ENCODE measurements at regions of chr4 and their contacts with region 1.

Region 1: GRCh38 chr4:87220094-87220822 is at the start of gene KLHL8:
- DNase-seq: peak; percentile 85
- H3K4me3 Mint-ChIP-seq: peak within 1 kb of the TSS; percentile 89
- H3K27ac Mint-ChIP-seq: peak within 1 kb of the TSS; percentile 82
- H3K4me1 Mint-ChIP-seq: peaks cover 19% of the 10 kb centered on the region
- H3K27me3 Mint-ChIP-seq: peaks cover 11% of the 10 kb centered on the region
- total RNA-seq, gene KLHL8: 11.6 and 12.3 TPM in 2 replicates

Region 2: DNA sequence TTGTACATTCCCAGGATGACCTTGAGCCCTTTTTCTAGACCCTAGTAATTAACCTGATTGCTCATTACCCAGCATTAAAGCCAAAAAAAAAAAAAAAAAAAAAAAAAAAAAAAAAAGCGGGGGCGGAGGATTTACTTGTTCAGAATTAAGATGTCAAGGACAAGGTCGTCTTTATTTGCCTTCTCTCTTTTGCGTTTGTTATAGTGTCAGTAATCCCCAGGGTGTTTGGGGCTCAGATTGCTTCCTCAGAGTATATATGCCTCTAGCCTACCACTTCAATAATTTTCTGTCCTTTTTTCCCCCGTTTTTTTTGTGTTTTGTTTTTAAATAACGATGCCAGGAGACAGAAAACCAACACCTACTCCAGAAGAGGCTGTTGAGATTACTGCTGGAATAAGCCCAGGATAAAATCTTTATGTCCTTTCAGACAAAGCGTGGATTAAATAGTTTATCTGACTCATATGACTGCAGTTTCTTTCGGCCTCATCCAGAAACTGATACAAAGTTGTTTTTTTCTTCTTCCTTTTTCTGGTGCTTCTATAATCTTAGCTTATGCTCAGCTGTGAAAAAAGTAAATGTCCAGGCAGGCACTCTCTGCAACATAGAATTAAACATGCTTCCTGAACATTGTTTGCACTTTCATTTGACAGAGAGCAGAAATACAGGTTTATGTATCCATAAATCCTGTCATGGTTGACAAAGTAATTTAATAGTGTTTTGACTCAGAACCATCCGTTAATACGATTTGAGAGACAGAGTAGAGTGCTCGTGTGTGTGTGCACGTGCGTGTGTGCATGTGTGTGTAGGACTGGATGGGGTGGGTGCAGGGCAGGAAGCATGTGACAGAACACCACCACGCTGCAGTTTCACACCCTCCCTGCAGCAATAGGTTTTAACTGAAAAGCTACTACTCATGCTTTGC is 146.8 kb before region 1 on chr4:
- intact Hi-C with region 1: no loop called
- DNase-seq: peak; percentile 46
- H3K4me3 Mint-ChIP-seq: peak overlapping the region; percentile 74
- H3K27ac Mint-ChIP-seq: peak overlapping the region; percentile 88
- H3K4me1 Mint-ChIP-seq: peaks cover 48% of the 10 kb centered on the region
- H3K27me3 Mint-ChIP-seq: no peaks in the 10 kb centered on the region

Region 3: DNA sequence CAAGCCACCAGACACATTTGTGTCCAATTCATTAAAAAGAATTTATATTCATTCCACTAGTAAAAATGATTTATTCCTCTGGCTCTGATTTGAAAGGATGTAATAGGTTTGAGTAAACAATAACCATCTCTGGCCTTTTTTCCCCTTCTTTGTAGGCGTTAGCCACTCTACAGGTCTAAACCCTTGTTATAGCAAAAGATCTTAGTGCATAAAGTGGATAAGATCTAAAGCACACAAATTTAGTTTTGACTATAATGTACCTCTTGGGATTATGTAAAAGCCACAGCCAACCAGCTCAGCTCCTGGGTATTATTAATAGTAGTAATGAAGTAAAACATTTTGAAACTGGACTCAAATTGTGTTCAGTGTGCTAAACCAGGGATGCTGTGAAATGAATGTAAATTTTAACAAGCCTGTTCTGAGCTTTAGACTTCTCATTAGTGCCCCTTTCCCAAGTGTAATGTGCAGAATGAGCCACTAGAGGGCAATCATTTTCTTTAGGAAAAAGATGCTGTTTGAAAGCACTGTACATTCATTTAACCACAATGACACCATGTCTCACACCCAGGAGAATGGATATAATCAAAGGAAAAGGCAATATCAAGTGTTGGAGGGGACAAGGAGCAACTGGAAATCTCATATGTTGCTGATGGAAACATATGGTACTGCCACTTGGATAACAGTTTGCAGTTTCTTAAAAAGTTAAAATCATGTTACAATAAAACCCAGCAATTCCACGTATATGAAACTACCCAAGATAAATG is 69.6 kb before region 1 on chr4:
- intact Hi-C with region 1: loop called (anchors 1 kb)
- DNase-seq: peak; percentile 15
- H3K4me3 Mint-ChIP-seq: no peak overlapping the region
- H3K27ac Mint-ChIP-seq: no peak overlapping the region
- H3K4me1 Mint-ChIP-seq: peaks cover 3% of the 10 kb centered on the region
- H3K27me3 Mint-ChIP-seq: no peaks in the 10 kb centered on the region

Region 4: DNA sequence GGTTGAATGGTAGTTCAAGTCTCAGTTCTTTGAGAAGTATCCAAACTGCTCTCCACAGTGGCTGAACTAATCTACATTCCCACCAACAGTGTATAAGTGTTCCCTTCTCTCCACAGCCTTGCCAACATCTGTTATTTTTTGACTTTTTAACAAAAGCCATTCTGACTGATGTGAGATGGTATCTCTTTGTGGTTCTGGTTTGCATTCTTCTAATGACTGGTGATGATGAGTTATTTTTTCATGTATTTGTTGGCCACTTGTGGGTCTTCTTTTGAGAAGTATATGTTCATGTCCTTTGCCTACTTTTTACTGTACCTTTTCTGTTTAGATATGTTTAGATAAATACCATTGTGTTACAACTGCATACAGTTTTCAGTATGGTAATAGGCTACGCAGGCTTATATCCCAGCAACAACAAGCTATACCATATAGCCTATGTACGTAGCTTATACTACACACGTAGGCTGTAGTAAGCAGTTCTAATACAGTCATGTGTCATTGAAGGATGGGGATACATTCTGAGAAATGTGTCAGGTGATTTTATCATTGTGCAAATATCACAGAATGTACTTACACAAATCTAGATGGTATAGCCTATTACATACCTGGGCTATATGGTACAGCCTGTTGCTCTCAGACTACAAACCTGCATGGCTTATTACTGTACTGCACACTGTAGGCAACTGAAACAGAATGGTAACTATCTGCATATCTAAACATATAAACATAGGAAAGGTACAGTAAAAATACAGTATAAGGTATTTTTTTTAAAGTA is 27.9 kb before region 1 on chr4:
- intact Hi-C with region 1: loop called (anchors 2 kb)
- DNase-seq: no peak
- H3K4me3 Mint-ChIP-seq: no peak overlapping the region
- H3K27ac Mint-ChIP-seq: no peak overlapping the region
- H3K4me1 Mint-ChIP-seq: peaks cover 17% of the 10 kb centered on the region
- H3K27me3 Mint-ChIP-seq: no peaks in the 10 kb centered on the region

Measured in activated T-helper 2 cell treated with anti-CD3 and anti-CD28 coated beads, Interferon-gamma antibody, Interleukin-2, Interleukin-4, amounts not matched to agents 10 μg/mL and 5 μg/mL and 100 μg/mL, durations not matched to agents 14 hours and 24 hours and 36 hours (primary cell).